Activated CD8-positive, alpha-beta memory T cell treated with anti-CD3 and anti-CD28 coated beads, Interleukin-2, amount 10 ng/mL, durations not matched to agents 7 days and 5 days (primary cell): ENCODE measurements at regions of chr11 and their contacts with region 1.

Region 1: GRCh38 chr11:66638177-66639065 is at the start of gene RBM4:
- DNase-seq: peak; percentile 99
- ATAC-seq: peak; percentile 97
- H3K4me3 Mint-ChIP-seq: peak within 1 kb of the TSS; percentile 87
- H3K27ac Mint-ChIP-seq: peak within 1 kb of the TSS; percentile 97
- H3K4me1 Mint-ChIP-seq: peaks cover 61% of the 10 kb centered on the region
- H3K27me3 Mint-ChIP-seq: no peaks in the 10 kb centered on the region
- total RNA-seq, gene RBM4: 111 to 119 TPM

Region 2: DNA sequence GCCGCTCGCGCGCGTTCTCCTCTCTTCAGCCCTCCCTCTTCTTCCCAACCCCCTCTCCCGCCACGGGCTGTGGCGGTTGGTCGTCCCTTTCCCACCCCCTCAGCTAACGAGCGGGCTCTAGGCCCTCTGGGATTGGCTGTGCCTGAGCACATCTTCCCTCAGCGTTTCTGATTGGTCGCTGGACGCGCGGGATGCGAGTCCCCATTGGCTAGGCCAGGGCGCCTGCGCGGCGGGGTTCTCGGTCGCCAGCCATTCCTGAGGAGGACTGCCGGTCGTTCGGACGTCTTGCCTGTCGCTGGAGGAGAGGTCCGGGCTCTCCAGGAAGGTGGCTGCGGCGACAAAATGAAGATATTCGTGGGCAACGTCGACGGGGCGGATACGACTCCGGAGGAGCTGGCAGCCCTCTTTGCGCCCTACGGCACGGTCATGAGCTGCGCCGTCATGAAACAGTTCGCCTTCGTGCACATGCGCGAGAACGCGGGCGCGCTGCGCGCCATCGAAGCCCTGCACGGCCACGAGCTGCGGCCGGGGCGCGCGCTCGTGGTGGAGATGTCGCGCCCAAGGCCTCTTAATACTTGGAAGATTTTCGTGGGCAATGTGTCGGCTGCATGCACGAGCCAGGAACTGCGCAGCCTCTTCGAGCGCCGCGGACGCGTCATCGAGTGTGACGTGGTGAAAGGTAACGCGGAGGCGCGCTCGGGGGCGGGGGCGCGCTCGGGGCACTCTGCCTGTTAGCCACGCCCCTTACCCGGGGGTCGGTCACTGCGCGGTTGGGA is 21.9 kb before region 1 on chr11 and contains the start of gene RBM14:
- CTCF ChIA-PET with region 1: interaction called, 16 read pairs
- DNase-seq: peak; percentile 99
- ATAC-seq: peak; percentile 94
- H3K4me3 Mint-ChIP-seq: peak within 1 kb of the TSS; percentile 98
- H3K27ac Mint-ChIP-seq: peak within 1 kb of the TSS; percentile 98
- H3K4me1 Mint-ChIP-seq: peaks cover 41% of the 10 kb centered on the region
- H3K27me3 Mint-ChIP-seq: no peaks in the 10 kb centered on the region
- total RNA-seq, gene RBM14: 152 to 176 TPM

Region 3: GRCh38 chr11:66624087-66624849 is 14.2 kb before region 1 on chr11:
- CTCF ChIA-PET with region 1: interaction called, 15 read pairs
- DNase-seq: no peak
- ATAC-seq: no peak
- H3K4me3 Mint-ChIP-seq: no peak overlapping the region
- H3K27ac Mint-ChIP-seq: no peak overlapping the region
- H3K4me1 Mint-ChIP-seq: peaks cover 45% of the 10 kb centered on the region
- H3K27me3 Mint-ChIP-seq: no peaks in the 10 kb centered on the region

Region 4: DNA sequence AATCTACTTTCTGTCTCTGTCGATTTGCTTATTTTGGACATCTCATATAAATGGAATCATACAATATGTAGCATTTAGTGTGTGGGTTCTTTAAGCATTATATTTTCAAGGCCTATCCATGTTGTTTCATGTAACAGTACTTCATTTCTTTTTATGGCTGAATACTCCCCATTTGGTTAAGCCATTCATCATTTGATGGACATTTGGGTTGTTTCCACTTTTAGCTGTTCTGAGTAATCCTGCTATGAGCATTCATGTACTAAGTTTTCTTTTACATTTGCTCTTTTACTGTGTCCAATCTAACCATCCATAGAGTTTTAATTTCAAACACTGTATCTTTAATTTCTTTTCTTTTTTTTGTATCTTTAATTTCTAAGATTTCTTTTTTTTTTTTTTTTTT is 146.2 kb after region 1 on chr11:
- CTCF ChIA-PET with region 1: no interaction called
- DNase-seq: no peak
- ATAC-seq: no peak
- H3K4me3 Mint-ChIP-seq: no peak overlapping the region
- H3K27ac Mint-ChIP-seq: no peak overlapping the region
- H3K4me1 Mint-ChIP-seq: peaks cover 3% of the 10 kb centered on the region
- H3K27me3 Mint-ChIP-seq: no peaks in the 10 kb centered on the region